Adrenal gland (tissue), 19 donors: ENCODE measurements at regions of chr9 and their contacts with region 1.

Region 1: GRCh38 chr9:86354011-86354817 is at the start of gene TUT7:
- DNase-seq: peak; percentile 96 to 98 (median 96)
- H3K4me3 ChIP-seq: peak within 1 kb of the TSS; percentile 11 to 87 (median 52)
- H3K27ac ChIP-seq: peak within 1 kb of the TSS; percentile 87 to 97 (median 93)
- H3K4me1 ChIP-seq: peaks cover 24 to 49% of the 10 kb centered on the region in 2 donors
- H3K27me3 ChIP-seq: no peaks in the 10 kb centered on the region
- CTCF ChIP-seq: peak in 1 of 6 experiments; percentile 31
- POLR2A ChIP-seq: peak; percentile 82 to 88
- total RNA-seq, gene TUT7: 12.7 to 51.7 (median 29.0) TPM

Region 2: GRCh38 chr9:86948074-86948929 is 594.1 kb after region 1 on chr9:
- intact Hi-C with region 1: loop called in 1 of 2 experiments (anchors 5 kb)
- DNase-seq: peak; percentile 77 to 88 (median 80)
- H3K4me3 ChIP-seq: peak overlapping the region in 2 of 4 donors; percentile 83 to 91
- H3K27ac ChIP-seq: peak overlapping the region in 4 of 5 donors; percentile 45 to 93 (median 73)
- H3K4me1 ChIP-seq: peaks cover 5 to 23% of the 10 kb centered on the region in 2 donors
- H3K27me3 ChIP-seq: no peaks in the 10 kb centered on the region
- CTCF ChIP-seq: peak; percentile 76 to 88 (median 86)
- POLR2A ChIP-seq: peak in 1 of 2 donors; percentile 12